Transverse colon (tissue), 4 donors: ENCODE measurements at regions of chr6 and their contacts with region 1.

Region 1: DNA sequence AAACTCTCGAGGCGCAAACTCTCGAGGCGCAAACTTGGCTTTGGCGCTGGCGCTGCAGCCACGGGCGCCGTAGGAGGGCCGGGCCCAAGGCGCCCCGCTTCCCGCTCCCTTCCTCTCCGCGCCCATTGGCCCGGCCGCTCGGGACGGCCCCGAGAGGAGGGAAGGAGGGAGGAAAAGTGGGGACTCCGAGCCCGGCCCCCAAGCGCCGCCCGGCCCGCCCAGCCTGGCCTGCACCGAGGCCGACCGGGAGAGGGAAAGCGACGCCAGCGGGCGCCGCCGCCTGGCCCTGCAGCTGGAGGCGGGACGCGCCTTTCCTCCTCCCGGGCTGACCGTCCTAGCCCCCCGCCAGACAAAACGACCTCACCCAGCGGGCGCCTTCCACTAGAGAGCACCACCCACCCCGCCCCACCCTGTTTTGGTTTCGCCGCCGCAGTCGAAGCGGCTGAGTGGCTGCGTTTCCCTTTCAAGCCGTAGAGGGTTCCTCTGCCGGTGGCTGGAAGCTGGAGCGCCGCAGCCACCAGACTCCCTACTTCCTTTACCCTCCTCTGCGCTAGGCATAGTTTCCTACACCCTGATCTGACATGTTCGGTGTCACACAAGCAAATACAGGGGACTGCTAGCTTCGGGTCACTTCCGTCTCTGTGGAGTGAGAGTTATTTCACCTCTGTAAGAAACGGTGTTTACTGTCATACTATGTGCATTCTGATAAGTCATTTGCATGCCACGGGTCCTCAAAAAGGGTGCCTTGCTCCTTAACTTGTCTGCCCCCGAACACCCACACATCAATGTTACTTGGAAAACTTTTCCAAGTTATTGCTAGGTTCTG is at the start of gene MBOAT1:
- DNase-seq: peak; percentile 93
- H3K4me3 ChIP-seq: peak within 1 kb of the TSS; percentile 13 to 69 (median 58)
- H3K27ac ChIP-seq: peak within 1 kb of the TSS; percentile 88 to 93 (median 91)
- H3K4me1 ChIP-seq: peaks cover 16 to 50% (median 32%) of the 10 kb centered on the region in 4 donors
- H3K27me3 ChIP-seq: no peaks in the 10 kb centered on the region
- CTCF ChIP-seq: peak in 1 of 5 experiments; percentile 24
- EP300 ChIP-seq: no peak
- POLR2A ChIP-seq: peak; percentile 80
- total RNA-seq, gene MBOAT1: 10.3 to 85.3 (median 66.5) TPM

Region 2: GRCh38 chr6:20126789-20127653 is 85.6 kb before region 1 on chr6:
- in situ Hi-C with region 1: no loop called
- intact Hi-C with region 1: loop called (anchors 10 kb)
- DNase-seq: peak; percentile 81
- H3K4me3 ChIP-seq: no peak overlapping the region
- H3K27ac ChIP-seq: peak overlapping the region; percentile 73 to 85 (median 81)
- H3K4me1 ChIP-seq: peaks cover 5 to 37% (median 29%) of the 10 kb centered on the region in 4 donors
- H3K27me3 ChIP-seq: no peaks in the 10 kb centered on the region
- CTCF ChIP-seq: peak; percentile 87 to 95 (median 93)
- EP300 ChIP-seq: no peak
- POLR2A ChIP-seq: no peak